Activated CD4-positive, alpha-beta T cell treated with anti-CD3 and anti-CD28 coated beads, Interleukin-2, amount 10 ng/mL, durations not matched to agents 7 days and 5 days (primary cell): ENCODE measurements at regions of chr19 and their contacts with region 1.

Region 1: GRCh38 chr19:46661020-46661731 is at the start of gene DACT3:
- DNase-seq: peak; percentile 100
- H3K4me3 Mint-ChIP-seq: peak within 1 kb of the TSS; percentile 65
- H3K27ac Mint-ChIP-seq: peak within 1 kb of the TSS; percentile 85
- H3K4me1 Mint-ChIP-seq: peaks cover 22% of the 10 kb centered on the region
- H3K27me3 Mint-ChIP-seq: peaks cover 23% of the 10 kb centered on the region
- total RNA-seq, gene DACT3: 0.31 to 0.42 TPM

Region 2: GRCh38 chr19:46478356-46478986 is 182.7 kb before region 1 on chr19:
- CTCF ChIA-PET with region 1: no interaction called
- POLR2A ChIA-PET with region 1: no interaction called
- DNase-seq: peak; percentile 17
- H3K4me3 Mint-ChIP-seq: no peak overlapping the region
- H3K27ac Mint-ChIP-seq: no peak overlapping the region
- H3K4me1 Mint-ChIP-seq: peaks cover 4% of the 10 kb centered on the region
- H3K27me3 Mint-ChIP-seq: peaks cover 32% of the 10 kb centered on the region

Region 3: DNA sequence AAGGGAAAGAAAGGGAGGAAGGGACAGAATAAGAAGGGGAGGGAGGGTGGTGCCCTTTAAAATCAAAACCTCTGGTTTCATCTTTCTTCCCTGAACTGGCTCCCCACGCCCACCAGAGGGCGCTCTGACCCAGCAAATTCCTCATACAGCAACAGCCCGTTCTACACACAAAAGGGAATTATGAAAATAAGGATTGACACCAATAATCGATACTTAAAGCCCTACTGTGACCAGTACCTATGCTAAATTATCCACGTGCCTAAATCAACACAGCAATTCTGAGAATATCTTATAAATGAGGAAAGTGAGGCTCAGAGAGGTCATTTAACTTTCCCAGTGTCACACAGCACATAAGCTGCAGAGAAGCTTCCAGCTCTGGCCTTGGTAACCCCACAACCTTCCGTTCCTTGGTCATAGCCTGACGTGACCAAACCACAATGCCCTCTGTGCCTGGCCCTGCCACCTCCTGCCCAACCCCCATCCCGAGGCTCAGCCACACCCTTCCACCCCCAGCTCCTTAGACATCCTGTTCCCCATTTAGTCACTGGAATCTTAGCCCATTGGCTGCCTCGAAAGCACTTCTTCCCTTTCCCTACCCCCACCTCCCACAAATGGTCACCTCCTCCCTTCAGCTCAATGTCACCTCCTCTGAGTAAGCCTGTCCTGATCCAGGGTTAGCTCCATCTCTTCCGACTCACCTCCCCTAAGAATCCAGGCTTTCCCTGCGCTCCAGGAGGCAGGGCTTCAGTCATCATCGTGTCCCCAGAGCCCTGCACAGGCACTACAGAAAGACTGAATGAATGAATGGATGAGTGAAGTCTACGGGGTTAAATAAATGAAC is 131.3 kb before region 1 on chr19:
- CTCF ChIA-PET with region 1: interaction called, 19 read pairs
- POLR2A ChIA-PET with region 1: no interaction called
- DNase-seq: peak; percentile 81
- H3K4me3 Mint-ChIP-seq: no peak overlapping the region
- H3K27ac Mint-ChIP-seq: peak overlapping the region; percentile 80
- H3K4me1 Mint-ChIP-seq: peaks cover 40% of the 10 kb centered on the region
- H3K27me3 Mint-ChIP-seq: peaks cover 2% of the 10 kb centered on the region

Region 4: DNA sequence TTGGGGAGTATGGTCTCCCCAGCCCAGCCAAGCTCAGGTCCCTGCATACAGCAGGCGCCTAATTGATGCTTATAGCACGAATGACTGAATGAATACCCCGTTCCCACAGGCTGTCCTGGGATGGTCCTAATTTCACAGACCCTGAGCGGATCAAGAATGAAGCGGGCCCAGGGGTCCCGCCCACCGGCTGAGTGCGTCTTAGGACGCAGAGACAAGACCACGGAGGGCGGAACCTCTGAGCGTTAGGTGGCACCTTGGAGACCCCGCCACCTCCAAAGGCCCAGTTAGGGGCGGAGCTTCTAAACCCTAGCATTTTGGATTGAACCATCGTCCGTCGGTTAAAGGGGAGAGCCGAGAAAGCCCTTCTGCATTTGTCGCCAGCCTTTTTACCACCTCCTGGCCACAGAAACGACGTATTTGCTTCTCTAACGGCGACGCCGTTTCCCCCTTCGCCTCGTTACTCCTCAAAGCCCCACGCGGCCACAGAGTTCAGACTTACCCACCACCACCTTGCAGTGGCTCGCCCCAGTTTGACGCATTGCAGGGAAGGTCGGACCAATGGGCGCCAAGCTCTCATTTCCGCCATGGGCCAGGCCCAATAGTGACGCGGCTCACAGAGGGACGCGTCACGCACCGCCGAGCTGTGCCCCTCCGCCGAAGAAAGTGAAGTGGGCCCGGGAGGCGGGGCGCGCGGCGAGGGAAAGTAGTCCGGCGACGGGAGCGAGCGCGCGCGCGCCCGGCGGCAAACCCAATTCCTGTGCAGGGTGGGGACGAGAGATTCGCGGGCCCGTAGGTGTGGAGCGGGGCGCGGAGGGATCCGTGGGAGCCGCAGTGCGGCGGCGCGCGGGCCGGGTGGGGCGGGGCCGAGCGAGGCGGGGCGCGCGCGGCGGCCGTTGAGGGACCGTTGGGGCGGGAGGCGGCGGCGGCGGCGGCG is 60.5 kb before region 1 on chr19:
- CTCF ChIA-PET with region 1: interaction called, 15 read pairs
- POLR2A ChIA-PET with region 1: interaction called, 3 read pairs
- DNase-seq: peak; percentile 97
- H3K4me3 Mint-ChIP-seq: peak overlapping the region; percentile 95
- H3K27ac Mint-ChIP-seq: peak overlapping the region; percentile 100
- H3K4me1 Mint-ChIP-seq: peaks cover 28% of the 10 kb centered on the region
- H3K27me3 Mint-ChIP-seq: peaks cover 5% of the 10 kb centered on the region

Region 5: GRCh38 chr19:46614114-46614722 is 47.0 kb before region 1 on chr19:
- CTCF ChIA-PET with region 1: interaction called, 78 read pairs
- POLR2A ChIA-PET with region 1: interaction called, 3 read pairs
- DNase-seq: peak; percentile 83
- H3K4me3 Mint-ChIP-seq: no peak overlapping the region
- H3K27ac Mint-ChIP-seq: peak overlapping the region; percentile 79
- H3K4me1 Mint-ChIP-seq: peaks cover 82% of the 10 kb centered on the region
- H3K27me3 Mint-ChIP-seq: no peaks in the 10 kb centered on the region

Region 6: GRCh38 chr19:46631481-46631880 is 29.7 kb before region 1 on chr19:
- CTCF ChIA-PET with region 1: interaction called, 18 read pairs
- POLR2A ChIA-PET with region 1: interaction called, 5 read pairs
- DNase-seq: no peak
- H3K4me3 Mint-ChIP-seq: no peak overlapping the region
- H3K27ac Mint-ChIP-seq: no peak overlapping the region
- H3K4me1 Mint-ChIP-seq: peaks cover 43% of the 10 kb centered on the region
- H3K27me3 Mint-ChIP-seq: peaks cover 12% of the 10 kb centered on the region

Region 7: GRCh38 chr19:46697204-46697960 is 36.2 kb after region 1 on chr19:
- CTCF ChIA-PET with region 1: no interaction called
- POLR2A ChIA-PET with region 1: no interaction called
- DNase-seq: peak; percentile 28
- H3K4me3 Mint-ChIP-seq: no peak overlapping the region
- H3K27ac Mint-ChIP-seq: peak overlapping the region; percentile 46
- H3K4me1 Mint-ChIP-seq: peaks cover 7% of the 10 kb centered on the region
- H3K27me3 Mint-ChIP-seq: no peaks in the 10 kb centered on the region